Activated T-helper 2 cell treated with anti-CD3 and anti-CD28 coated beads, Interferon-gamma antibody, Interleukin-2, Interleukin-4, amounts not matched to agents 10 μg/mL and 5 μg/mL and 100 μg/mL, durations not matched to agents 14 hours and 24 hours and 36 hours (primary cell): ENCODE measurements at regions of chr3 and their contacts with region 1.

Region 1: GRCh38 chr3:158672293-158673176 is at the start of gene LXN:
- DNase-seq: peak; percentile 74
- H3K4me3 Mint-ChIP-seq: peak within 1 kb of the TSS; percentile 88
- H3K27ac Mint-ChIP-seq: peak within 1 kb of the TSS; percentile 92
- H3K4me1 Mint-ChIP-seq: peaks cover 19% of the 10 kb centered on the region
- H3K27me3 Mint-ChIP-seq: no peaks in the 10 kb centered on the region
- total RNA-seq, gene LXN: 25.8 and 27.2 TPM in 2 replicates

Region 2: GRCh38 chr3:158659454-158660237 is 12.9 kb before region 1 on chr3:
- intact Hi-C with region 1: loop called (anchors 2 kb)
- DNase-seq: peak; percentile 38
- H3K4me3 Mint-ChIP-seq: no peak overlapping the region
- H3K27ac Mint-ChIP-seq: peak overlapping the region; percentile 55
- H3K4me1 Mint-ChIP-seq: peaks cover 9% of the 10 kb centered on the region
- H3K27me3 Mint-ChIP-seq: no peaks in the 10 kb centered on the region

Region 3: DNA sequence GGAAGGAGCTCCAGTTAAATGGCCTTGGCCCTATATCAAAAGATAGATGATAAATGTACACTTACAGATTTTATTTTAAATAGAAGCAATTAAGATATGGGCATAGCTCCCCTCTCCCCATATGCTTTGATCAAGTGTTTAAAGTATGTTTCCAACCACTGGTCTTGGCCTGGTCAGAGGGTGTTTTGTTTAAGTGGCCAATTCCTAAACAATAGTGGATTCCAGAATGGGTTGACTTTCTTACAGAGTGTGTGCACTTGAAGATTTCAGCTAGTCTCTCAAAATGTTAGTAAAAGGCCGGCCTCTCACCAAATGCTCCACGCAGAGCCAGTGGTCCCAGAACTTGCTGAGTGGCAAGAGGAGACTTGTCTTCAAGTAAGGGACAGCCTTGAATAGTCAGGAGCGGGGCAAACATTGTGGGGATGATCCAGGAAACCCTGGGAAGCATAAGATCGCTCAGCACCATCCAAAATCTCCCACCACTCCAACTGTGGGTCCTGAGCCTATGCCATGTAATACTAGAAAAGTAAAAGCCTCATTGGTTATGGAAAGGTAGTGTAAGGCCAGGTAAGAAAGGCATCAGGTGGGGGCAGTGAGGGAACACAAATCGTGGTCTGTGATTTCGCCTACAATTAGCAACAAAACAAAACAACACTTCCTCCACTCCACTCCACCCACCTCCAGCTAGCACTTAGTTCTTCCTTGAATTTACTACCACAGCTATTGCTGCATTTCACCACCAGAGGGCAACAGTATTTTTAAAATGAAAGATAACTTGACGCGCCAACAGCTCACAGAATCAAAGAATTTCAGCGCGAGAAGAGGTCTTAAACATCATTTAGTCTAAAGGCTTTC is 54.9 kb after region 1 on chr3:
- intact Hi-C with region 1: loop called (anchors 1 kb)
- DNase-seq: peak; percentile 31
- H3K4me3 Mint-ChIP-seq: peak overlapping the region; percentile 61
- H3K27ac Mint-ChIP-seq: peak overlapping the region; percentile 61
- H3K4me1 Mint-ChIP-seq: peaks cover 44% of the 10 kb centered on the region
- H3K27me3 Mint-ChIP-seq: no peaks in the 10 kb centered on the region